Transverse colon (tissue), 4 donors: ENCODE measurements at regions of chr2 and their contacts with region 1.

Region 1: DNA sequence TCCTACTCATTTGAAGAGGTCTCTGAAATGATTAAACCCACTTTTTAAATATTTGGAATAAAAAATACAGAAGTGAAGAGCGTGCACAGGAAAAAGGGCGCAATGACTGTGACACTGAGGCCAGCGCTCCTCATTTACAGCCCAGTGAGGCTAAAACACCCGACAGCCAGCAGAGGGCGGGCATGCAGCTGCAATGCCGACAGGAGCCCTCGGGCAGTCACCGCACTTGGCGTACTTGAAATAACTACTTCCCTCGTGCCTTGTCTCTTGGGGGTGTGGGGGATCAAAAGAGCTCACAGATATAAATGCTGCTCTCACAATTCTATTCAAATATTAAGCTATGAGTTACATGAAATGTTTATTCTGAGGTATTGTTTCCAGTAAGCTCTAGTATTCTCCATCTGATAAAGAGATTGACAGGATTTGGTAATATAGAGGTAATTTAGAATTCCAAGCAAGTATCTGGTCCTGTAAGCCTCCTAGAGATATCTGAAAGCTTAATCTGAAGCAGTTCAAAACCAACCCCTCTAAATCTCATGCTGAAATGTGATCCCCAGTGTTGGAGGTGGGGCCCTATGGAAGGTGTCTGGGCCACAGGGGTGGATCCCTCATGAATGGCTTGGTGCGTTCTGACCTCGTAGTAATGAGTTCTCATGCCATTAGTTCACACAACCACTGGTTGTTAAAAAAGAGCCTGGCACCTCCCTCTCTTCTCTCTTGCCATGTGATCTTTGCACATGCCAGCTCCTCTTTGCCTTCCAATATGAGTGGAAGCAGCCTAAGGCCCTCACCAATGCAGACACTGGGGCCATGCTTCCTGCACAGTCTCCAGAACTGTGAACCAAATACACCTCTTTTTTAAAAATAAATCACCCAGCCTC is 93.6 kb downstream of the ZAP70 start:
- DNase-seq: peak; percentile 86
- H3K4me3 ChIP-seq: no peak overlapping the region
- H3K27ac ChIP-seq: no peak overlapping the region
- H3K4me1 ChIP-seq: peaks cover 0 to 2% (median 0%) of the 10 kb centered on the region in 4 donors
- H3K27me3 ChIP-seq: no peaks in the 10 kb centered on the region
- CTCF ChIP-seq: peak; percentile 88 to 95 (median 91)
- EP300 ChIP-seq: no peak
- POLR2A ChIP-seq: no peak

Region 2: GRCh38 chr2:98175811-98176210 is 368.8 kb after region 1 on chr2:
- in situ Hi-C with region 1: loop called in 1 of 4 experiments (anchors 25 kb)
- intact Hi-C with region 1: no loop called
- DNase-seq: peak; percentile 63
- H3K4me3 ChIP-seq: no peak overlapping the region
- H3K27ac ChIP-seq: no peak overlapping the region
- H3K4me1 ChIP-seq: no peaks in the 10 kb centered on the region
- H3K27me3 ChIP-seq: peaks cover 31% of the 10 kb centered on the region
- CTCF ChIP-seq: peak in 4 of 5 experiments; percentile 17 to 48 (median 26)
- EP300 ChIP-seq: no peak
- POLR2A ChIP-seq: no peak

Region 3: GRCh38 chr2:98269274-98269673 is 462.3 kb after region 1 on chr2:
- in situ Hi-C with region 1: loop called in 2 of 4 experiments (anchors 5 to 25 kb)
- intact Hi-C with region 1: no loop called
- DNase-seq: no peak
- H3K4me3 ChIP-seq: no peak overlapping the region
- H3K27ac ChIP-seq: peak overlapping the region in 1 of 4 donors; percentile 18
- H3K4me1 ChIP-seq: peaks cover 0 to 10% (median 0%) of the 10 kb centered on the region in 4 donors
- H3K27me3 ChIP-seq: no peaks in the 10 kb centered on the region
- CTCF ChIP-seq: peak; percentile 65 to 78 (median 76)
- EP300 ChIP-seq: no peak
- POLR2A ChIP-seq: no peak

Region 4: GRCh38 chr2:98385050-98385699 is 578.2 kb after region 1 on chr2:
- in situ Hi-C with region 1: loop called (anchors 5 to 25 kb)
- intact Hi-C with region 1: loop called (anchors 2 kb)
- DNase-seq: peak; percentile 84
- H3K4me3 ChIP-seq: no peak overlapping the region
- H3K27ac ChIP-seq: no peak overlapping the region
- H3K4me1 ChIP-seq: peaks cover 0 to 3% (median 1%) of the 10 kb centered on the region in 4 donors
- H3K27me3 ChIP-seq: no peaks in the 10 kb centered on the region
- CTCF ChIP-seq: peak; percentile 90 to 99 (median 95)
- EP300 ChIP-seq: no peak
- POLR2A ChIP-seq: no peak